ENCODE measurements at regions of chr2 and their contacts with region 1.

Region 1: DNA sequence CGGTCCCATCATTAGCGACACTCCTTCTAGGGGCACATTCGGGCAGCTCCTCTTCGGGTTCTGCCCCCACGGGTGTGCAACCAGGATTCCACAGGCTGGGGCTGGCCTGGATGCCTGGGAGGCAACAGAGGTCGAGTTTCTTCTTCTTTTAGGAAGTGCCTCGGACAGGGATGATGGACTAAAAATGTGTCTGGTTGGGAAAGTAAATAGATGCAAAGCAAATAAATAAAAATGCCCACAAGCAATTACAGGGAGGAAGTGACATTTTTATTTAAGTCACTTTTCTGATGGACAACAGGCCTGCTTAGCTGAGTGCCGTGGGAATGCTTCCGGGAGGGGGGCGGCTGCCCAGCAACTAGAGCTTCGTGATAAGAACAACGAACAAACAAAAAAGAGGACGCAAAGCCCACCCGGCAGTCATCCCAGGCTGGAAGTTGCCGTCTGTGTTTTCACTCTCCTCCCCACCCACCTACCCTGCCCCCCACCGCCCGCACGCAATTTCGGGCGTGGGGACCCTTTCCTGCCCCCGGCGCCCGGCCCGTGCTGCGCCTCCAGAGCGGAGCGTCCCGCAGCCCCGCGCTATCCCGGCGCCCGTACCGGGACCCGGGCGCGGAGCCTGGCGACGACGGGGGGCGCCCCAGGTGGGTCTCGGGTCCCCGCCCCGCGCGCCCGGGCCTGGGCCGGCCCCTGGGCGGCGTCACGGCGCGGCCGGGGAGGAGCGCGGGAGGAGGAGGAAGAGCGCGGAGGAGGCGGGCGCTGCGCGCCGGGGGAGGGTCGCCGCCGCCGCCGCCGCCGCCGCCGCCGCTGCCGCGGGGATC is 412 bp upstream of the NCK2 start:
- DNase-seq: peak; percentile 36
- H3K4me3 ChIP-seq: peak overlapping the region; percentile 2 to 67 (median 12)
- H3K27ac ChIP-seq: no peak overlapping the region
- H3K4me1 ChIP-seq: peaks cover 30% of the 10 kb centered on the region
- H3K27me3 ChIP-seq: peaks cover 18 to 29% of the 10 kb centered on the region in 2 experiments
- CTCF ChIP-seq: no peak
- POLR2A ChIP-seq: peak; percentile 14

Region 2: GRCh38 chr2:103743195-103743594 is 2001.1 kb before region 1 on chr2:
- CTCF ChIA-PET with region 1: no interaction called
- POLR2A ChIA-PET with region 1: no interaction called
- dilution Hi-C with region 1: no loop called
- intact Hi-C with region 1: no loop called
- DNase-seq: no peak
- H3K4me3 ChIP-seq: no peak overlapping the region
- H3K27ac ChIP-seq: no peak overlapping the region
- H3K4me1 ChIP-seq: no peaks in the 10 kb centered on the region
- H3K27me3 ChIP-seq: no peaks in the 10 kb centered on the region
- CTCF ChIP-seq: no peak
- POLR2A ChIP-seq: no peak

Region 3: GRCh38 chr2:105344704-105345345 is 399.5 kb before region 1 on chr2:
- CTCF ChIA-PET with region 1: interaction called, 3 read pairs
- POLR2A ChIA-PET with region 1: no interaction called
- dilution Hi-C with region 1: no loop called
- intact Hi-C with region 1: loop called (anchors 10 kb)
- DNase-seq: peak; percentile 62
- H3K4me3 ChIP-seq: no peak overlapping the region
- H3K27ac ChIP-seq: no peak overlapping the region
- H3K4me1 ChIP-seq: no peaks in the 10 kb centered on the region
- H3K27me3 ChIP-seq: no peaks in the 10 kb centered on the region
- CTCF ChIP-seq: peak; percentile 12 to 24
- POLR2A ChIP-seq: no peak

Region 4: GRCh38 chr2:105553538-105554196 is 190.6 kb before region 1 on chr2:
- CTCF ChIA-PET with region 1: no interaction called
- POLR2A ChIA-PET with region 1: no interaction called
- dilution Hi-C with region 1: no loop called
- intact Hi-C with region 1: loop called (anchors 5 kb)
- DNase-seq: peak; percentile 51
- H3K4me3 ChIP-seq: peak overlapping the region in 1 of 3 experiments; percentile 1
- H3K27ac ChIP-seq: peak overlapping the region; percentile 76
- H3K4me1 ChIP-seq: peaks cover 15% of the 10 kb centered on the region
- H3K27me3 ChIP-seq: peaks cover 11 to 15% of the 10 kb centered on the region in 2 experiments
- CTCF ChIP-seq: no peak
- POLR2A ChIP-seq: no peak

Region 5: DNA sequence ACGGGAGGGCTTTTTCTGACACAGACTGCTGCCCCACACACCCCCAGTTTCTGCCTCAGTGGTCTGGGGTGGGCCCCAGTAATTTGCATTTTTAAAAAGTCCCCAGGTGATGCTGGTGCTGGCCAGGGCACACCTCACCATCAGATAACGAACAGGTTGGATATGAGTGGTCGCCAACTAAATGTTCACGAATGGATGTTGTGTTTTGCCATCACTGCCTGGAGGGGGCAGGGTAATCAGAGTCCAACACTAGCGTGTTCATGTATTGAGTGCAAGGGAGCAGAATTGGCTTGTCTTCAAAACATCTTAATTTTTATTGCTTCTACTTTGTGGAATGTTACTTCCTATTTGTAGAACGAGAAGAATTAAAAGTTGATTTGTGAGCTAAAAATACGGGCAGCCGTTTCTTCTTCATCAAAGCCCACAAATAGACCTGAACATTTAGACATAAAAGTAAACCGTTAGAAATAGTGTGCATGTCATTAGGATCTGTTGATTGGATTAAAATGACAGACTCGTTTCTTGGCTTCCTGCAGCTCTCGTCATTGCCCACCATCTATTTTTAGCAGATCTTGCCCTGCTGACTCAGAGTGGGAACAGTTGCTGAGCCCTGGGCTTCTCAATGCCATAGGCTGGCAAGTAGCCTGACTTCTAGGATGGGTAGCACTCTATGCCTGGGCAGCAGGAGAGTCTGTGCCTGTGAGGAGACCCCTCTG is 45.6 kb after region 1 on chr2:
- CTCF ChIA-PET with region 1: no interaction called
- POLR2A ChIA-PET with region 1: no interaction called
- dilution Hi-C with region 1: no loop called
- intact Hi-C with region 1: loop called (anchors 2 kb)
- DNase-seq: peak; percentile 79
- H3K4me3 ChIP-seq: no peak overlapping the region
- H3K27ac ChIP-seq: peak overlapping the region; percentile 40
- H3K4me1 ChIP-seq: peaks cover 15% of the 10 kb centered on the region
- H3K27me3 ChIP-seq: no peaks in the 10 kb centered on the region
- CTCF ChIP-seq: peak in 1 of 2 donors; percentile 5
- POLR2A ChIP-seq: no peak

Region 6: DNA sequence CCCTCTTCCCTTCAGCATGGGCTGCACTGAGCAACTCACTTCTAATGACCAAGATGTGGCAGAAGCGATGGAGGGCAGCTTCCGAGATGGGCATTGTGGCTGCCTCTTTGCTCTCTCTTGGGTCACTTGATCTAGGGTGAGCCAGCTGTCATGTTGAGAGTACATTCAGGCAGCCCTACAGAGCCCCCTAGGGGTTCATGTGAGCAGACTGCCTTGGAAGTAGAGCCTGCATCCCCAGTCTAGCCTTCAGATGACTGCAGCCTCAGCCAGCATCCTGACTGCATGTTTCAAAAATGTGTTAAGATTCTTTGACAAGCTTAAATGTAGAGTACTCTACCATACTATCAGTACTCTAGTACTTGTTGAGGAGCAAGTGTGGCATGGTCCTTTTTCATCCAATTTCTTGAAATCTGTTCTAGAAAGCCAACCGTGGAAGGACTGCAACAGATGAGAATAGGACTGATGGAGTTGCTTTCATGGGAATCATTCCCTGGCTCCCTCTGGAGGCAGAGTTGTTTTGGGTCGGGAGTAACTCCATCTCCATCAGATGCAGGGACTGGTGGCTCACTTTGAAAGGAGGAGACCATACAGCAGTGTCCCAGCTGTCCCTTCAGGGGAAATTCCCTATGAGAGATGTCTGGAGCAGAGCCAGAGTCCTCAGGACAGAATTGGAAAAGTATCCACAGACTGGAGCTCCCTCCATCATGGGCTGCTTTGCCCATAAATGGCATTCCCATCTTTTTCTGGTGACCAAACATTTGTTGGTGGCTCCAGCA is 144.5 kb after region 1 on chr2:
- CTCF ChIA-PET with region 1: no interaction called
- POLR2A ChIA-PET with region 1: no interaction called
- dilution Hi-C with region 1: no loop called
- intact Hi-C with region 1: loop called (anchors 10 kb)
- DNase-seq: no peak
- H3K4me3 ChIP-seq: no peak overlapping the region
- H3K27ac ChIP-seq: no peak overlapping the region
- H3K4me1 ChIP-seq: no peaks in the 10 kb centered on the region
- H3K27me3 ChIP-seq: no peaks in the 10 kb centered on the region
- CTCF ChIP-seq: peak in 1 of 2 donors; percentile 19
- POLR2A ChIP-seq: no peak

Region 7: GRCh38 chr2:106085181-106085940 is 341.1 kb after region 1 on chr2:
- CTCF ChIA-PET with region 1: no interaction called
- POLR2A ChIA-PET with region 1: no interaction called
- dilution Hi-C with region 1: no loop called
- intact Hi-C with region 1: loop called (anchors 10 kb)
- DNase-seq: peak; percentile 52
- H3K4me3 ChIP-seq: no peak overlapping the region
- H3K27ac ChIP-seq: no peak overlapping the region
- H3K4me1 ChIP-seq: no peaks in the 10 kb centered on the region
- H3K27me3 ChIP-seq: peaks cover 4% of the 10 kb centered on the region in 2 experiments
- CTCF ChIP-seq: peak; percentile 18 to 54
- POLR2A ChIP-seq: no peak